PC-9 (cell line): ENCODE measurements at regions of chr20 and their contacts with region 1.

Region 1: GRCh38 chr20:1503564-1504227 is 12.5 kb upstream of the SIRPB2 start:
- DNase-seq: peak; percentile 87
- H3K4me3 ChIP-seq: no peak overlapping the region
- H3K27ac ChIP-seq: peak overlapping the region; percentile 73; the same call in 1 of the 2 replicates
- H3K4me1 ChIP-seq: peaks cover 47% of the 10 kb centered on the region
- H3K27me3 ChIP-seq: no peaks in the 10 kb centered on the region
- CTCF ChIP-seq: peak; percentile 96

Region 2: DNA sequence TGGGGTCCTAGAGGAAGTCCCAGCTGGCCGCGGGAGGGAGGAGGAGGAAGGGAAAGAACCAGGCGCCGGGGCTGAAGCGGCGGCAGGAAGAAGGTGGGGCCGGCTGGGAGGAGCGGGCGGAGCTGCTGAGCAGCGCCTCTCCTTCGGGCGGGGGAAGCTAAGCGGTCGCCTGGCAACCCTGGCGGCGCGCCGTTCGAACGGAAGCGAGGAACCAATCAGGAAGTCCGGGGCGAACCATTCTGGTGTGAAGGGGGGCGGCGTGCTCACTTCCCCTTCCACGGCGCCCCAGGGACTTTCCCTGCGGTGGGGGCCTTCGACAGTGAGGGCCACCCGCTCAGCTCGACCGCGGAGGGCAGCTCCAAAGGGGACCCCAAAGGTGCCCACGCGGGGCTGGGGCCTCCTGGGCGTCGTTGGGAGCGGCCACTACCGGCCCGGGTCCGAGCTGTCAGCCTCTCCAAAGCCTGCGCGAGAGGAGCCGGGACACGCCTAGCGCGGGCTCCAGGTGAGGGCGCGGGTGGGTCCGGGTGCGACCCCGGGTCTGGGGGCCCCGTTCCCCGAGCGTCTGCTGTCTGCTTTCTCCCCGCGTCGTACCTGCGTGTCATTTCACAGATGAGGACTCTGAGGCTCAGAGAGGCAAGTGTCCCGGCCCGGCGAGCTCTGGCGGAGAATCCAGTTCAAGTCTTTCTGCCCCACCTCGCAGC is 670.1 kb before region 1 on chr20 and contains the start of gene FAM110A:
- CTCF ChIA-PET with region 1: no interaction called
- POLR2A ChIA-PET with region 1: interaction called, 11 read pairs
- intact Hi-C with region 1: no loop called
- DNase-seq: peak; percentile 81 to 96
- H3K4me3 ChIP-seq: peak within 1 kb of the TSS; percentile 97
- H3K27ac ChIP-seq: peak within 1 kb of the TSS; percentile 23; the same call in 1 of the 2 replicates
- H3K4me1 ChIP-seq: peaks cover 65% of the 10 kb centered on the region
- H3K27me3 ChIP-seq: no peaks in the 10 kb centered on the region
- CTCF ChIP-seq: no peak
- total RNA-seq, gene FAM110A: 30.8 and 36.6 TPM in 2 replicates

Region 3: DNA sequence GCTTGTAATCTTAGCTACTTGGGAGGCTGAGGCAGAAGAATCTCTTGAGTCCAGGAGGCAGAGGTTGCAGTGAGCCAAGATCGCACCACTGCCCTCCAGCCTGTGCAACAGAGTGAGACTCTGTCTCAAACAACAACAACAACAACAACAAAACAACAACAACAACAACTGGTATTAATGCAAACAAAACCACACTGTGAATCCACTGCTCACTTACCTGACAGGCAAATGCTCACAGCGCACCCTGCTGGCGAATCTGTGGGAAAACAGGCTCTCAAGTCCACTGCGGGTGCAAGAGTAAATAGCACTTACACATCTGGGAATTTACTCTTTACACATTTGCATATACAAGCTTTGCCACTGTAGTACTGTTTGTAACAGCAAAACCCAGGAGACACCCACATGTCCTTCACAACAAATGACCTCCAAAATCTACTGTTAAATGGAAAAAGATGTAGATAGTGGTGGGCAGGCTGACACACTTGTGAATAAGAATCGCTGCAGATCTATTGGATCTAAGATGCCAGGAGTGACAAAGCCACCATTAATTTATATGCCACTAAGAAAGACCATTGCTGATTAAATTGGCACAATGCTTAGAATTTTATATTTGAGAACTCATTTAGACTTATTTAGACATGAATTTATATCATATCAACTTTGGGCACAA is 66.3 kb before region 1 on chr20:
- CTCF ChIA-PET with region 1: interaction called, 11 read pairs
- POLR2A ChIA-PET with region 1: no interaction called
- intact Hi-C with region 1: loop called (anchors 1 kb)
- DNase-seq: peak; percentile 71 to 75
- H3K4me3 ChIP-seq: no peak overlapping the region
- H3K27ac ChIP-seq: no peak overlapping the region
- H3K4me1 ChIP-seq: 0 out of 2 replicates have a peak, but pooled peaks cover 8% of the 10 kb centered on the region
- H3K27me3 ChIP-seq: no peaks in the 10 kb centered on the region
- CTCF ChIP-seq: peak; percentile 94

Region 4: GRCh38 chr20:1466211-1467081 is 37.2 kb before region 1 on chr20 and contains the start of gene NSFL1C:
- CTCF ChIA-PET with region 1: interaction called, 34 read pairs
- POLR2A ChIA-PET with region 1: no interaction called
- intact Hi-C with region 1: loop called (anchors 1 kb)
- DNase-seq: peak; percentile 79 to 98
- H3K4me3 ChIP-seq: peak within 1 kb of the TSS; percentile 88
- H3K27ac ChIP-seq: peak within 1 kb of the TSS; percentile 89
- H3K4me1 ChIP-seq: peaks cover 37% of the 10 kb centered on the region
- H3K27me3 ChIP-seq: no peaks in the 10 kb centered on the region
- CTCF ChIP-seq: peak; percentile 89
- total RNA-seq, gene NSFL1C: 151 and 160 TPM in 2 replicates

Region 5: DNA sequence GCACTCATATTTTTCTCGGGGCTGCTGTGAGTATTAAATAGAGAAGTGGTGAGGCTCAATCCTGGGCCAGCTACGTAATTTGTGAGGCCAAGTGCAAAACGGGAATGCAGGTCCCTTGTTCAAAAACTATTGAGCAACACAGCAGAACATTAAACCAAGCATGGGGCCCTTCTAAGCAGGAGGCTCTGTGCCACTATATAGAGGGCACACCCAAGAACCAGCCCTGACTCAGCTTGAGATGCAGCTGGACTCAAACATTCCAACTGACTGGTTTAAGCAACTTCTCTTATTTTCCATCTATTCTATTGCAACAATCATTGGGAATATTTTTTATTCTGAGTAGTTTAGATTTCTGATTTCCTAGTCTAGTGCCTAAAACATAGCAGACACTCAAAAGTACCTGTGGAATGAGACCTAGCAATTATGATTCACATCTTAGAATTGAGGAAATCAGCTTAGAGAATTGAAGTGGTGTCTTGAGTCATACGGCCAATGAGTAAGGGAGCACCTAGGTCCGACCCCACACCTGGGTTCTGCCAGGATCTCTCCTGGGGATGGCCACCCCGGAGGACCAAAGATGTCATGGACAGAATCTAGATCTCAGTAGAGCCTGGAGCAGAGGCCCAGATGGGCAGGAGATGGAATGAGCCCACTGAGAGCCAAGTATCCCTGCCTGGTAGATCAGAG is 13.8 kb before region 1 on chr20:
- CTCF ChIA-PET with region 1: interaction called, 6 read pairs
- POLR2A ChIA-PET with region 1: interaction called, 3 read pairs
- intact Hi-C with region 1: loop called (anchors 1 kb)
- DNase-seq: peak; percentile 65 to 98
- H3K4me3 ChIP-seq: peak overlapping the region; percentile 32
- H3K27ac ChIP-seq: peak overlapping the region; percentile 97
- H3K4me1 ChIP-seq: peaks cover 53% of the 10 kb centered on the region
- H3K27me3 ChIP-seq: no peaks in the 10 kb centered on the region
- CTCF ChIP-seq: no peak

Region 6: GRCh38 chr20:1718604-1719384 is 215.1 kb after region 1 on chr20:
- CTCF ChIA-PET with region 1: interaction called, 5 read pairs
- POLR2A ChIA-PET with region 1: interaction called, 6 read pairs
- intact Hi-C with region 1: loop called (anchors 5 kb)
- DNase-seq: peak; percentile 82 to 97
- H3K4me3 ChIP-seq: peak overlapping the region; percentile 31
- H3K27ac ChIP-seq: peak overlapping the region; percentile 99
- H3K4me1 ChIP-seq: peaks cover 77% of the 10 kb centered on the region
- H3K27me3 ChIP-seq: no peaks in the 10 kb centered on the region
- CTCF ChIP-seq: no peak

Region 7: DNA sequence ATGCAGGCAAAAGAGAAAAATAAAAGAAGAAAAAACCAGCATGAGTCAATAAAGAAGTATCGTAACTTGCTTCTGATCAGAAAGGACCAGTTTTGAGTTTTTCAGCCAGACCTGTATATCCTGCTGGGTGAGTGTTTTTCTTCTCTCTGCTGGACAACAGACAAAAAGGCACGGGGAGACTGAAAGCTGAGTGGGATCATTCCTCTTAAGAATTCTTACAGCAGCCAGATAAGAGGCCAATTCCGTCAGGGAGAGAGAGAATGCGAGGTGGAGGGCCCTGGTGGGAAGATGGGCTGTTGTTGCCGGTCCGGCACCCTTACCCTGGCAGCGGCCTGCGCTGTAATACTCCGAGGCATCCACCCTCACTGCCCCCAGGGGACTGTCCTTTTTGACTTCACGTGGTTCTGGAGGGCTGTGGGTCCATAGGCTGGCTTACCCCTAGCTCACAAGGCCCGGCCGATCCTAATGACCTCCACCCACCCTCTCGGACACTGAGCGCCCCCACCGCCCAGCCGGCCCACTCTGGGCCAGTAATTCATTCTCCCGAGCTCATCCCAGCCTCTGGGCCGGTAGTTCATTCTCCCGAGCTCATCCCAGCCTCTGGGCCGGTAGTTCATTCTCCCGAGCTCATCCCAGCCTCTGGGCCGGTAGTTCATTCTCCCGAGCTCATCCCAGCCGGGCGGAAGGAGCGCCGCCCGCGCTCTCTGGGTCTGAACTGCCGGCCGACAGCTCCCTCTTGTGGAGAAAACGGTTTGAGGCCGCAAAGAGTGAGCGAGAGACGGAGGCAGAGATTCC is 273.2 kb after region 1 on chr20:
- CTCF ChIA-PET with region 1: interaction called, 24 read pairs
- POLR2A ChIA-PET with region 1: no interaction called
- intact Hi-C with region 1: loop called (anchors 1 kb)
- DNase-seq: peak; percentile 86 to 90
- H3K4me3 ChIP-seq: peak overlapping the region; percentile 70
- H3K27ac ChIP-seq: peak overlapping the region; percentile 74
- H3K4me1 ChIP-seq: peaks cover 27% of the 10 kb centered on the region
- H3K27me3 ChIP-seq: no peaks in the 10 kb centered on the region
- CTCF ChIP-seq: peak; percentile 89